Tibial artery (tissue), 4 donors: ENCODE measurements at regions of chr17 and their contacts with region 1.

Region 1: GRCh38 chr17:75116737-75117136 is 7.0 kb downstream of the ARMC7 start:
- DNase-seq: no peak
- H3K4me3 ChIP-seq: no peak overlapping the region
- H3K27ac ChIP-seq: no peak overlapping the region
- H3K4me1 ChIP-seq: peaks cover 0 to 23% (median 9%) of the 10 kb centered on the region in 4 donors
- H3K27me3 ChIP-seq: no peaks in the 10 kb centered on the region
- CTCF ChIP-seq: no peak

Region 2: DNA sequence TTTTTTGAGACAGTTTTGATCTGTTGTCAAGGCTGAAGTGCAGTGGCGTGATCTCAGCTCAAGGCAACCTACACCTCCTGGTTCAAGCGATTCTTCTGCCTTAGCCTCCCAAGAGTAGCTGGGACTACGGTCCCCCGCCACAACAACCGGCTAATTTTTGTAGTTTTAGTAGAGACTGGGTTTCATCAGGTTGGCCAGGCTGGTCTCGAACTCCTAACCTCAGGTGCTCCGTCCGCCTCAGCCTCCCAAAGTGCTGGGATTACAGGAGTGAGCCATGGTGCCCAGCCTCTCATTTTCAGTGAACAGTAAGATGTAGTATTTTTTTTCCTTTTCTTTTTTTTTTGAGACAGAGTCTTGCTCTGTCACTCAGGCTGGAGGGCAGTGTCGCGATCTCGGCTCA is 58.3 kb after region 1 on chr17:
- intact Hi-C with region 1: loop called (anchors 2 kb)
- DNase-seq: no peak
- H3K4me3 ChIP-seq: no peak overlapping the region
- H3K27ac ChIP-seq: no peak overlapping the region
- H3K4me1 ChIP-seq: peaks cover 0 to 14% (median 8%) of the 10 kb centered on the region in 4 donors
- H3K27me3 ChIP-seq: no peaks in the 10 kb centered on the region
- CTCF ChIP-seq: no peak